ENCODE measurements at regions of chr10 and their contacts with region 1.

Region 1: GRCh38 chr10:61284222-61284890 is 168.8 kb downstream of the TMEM26 start:
- DNase-seq: no peak
- H3K4me3 ChIP-seq: no peak overlapping the region
- H3K27ac ChIP-seq: no peak overlapping the region
- H3K4me1 ChIP-seq: no peaks in the 10 kb centered on the region
- H3K27me3 ChIP-seq: no peaks in the 10 kb centered on the region
- CTCF ChIP-seq: peak; percentile 65 to 88 (median 79)
- POLR2A ChIP-seq: no peak

Region 2: DNA sequence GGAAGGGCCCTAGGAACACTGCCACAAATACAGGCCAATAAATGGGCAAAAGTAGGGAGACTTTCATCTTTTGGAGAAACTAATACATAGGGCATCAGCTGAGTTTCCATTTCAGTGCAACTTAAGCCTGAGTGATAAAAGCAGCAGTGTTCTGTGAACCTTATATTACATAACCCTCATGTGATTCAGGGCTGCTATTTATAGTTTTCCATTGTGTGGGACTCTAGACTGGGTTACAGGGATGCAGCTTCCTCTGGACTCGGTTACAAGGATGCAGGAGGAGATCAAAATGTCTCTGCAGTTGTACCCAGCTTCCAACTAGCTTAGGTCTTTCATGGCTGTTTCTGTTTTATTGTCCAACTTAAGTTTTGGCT is 473.6 kb before region 1 on chr10:
- intact Hi-C with region 1: loop called (anchors 5 kb)
- DNase-seq: no peak
- H3K4me3 ChIP-seq: no peak overlapping the region
- H3K27ac ChIP-seq: peak overlapping the region in 1 of 2 donors; percentile 59
- H3K4me1 ChIP-seq: no peaks in the 10 kb centered on the region
- H3K27me3 ChIP-seq: peaks cover 5% of the 10 kb centered on the region
- CTCF ChIP-seq: no peak
- POLR2A ChIP-seq: no peak

Region 3: GRCh38 chr10:60914690-60915141 is 369.6 kb before region 1 on chr10:
- intact Hi-C with region 1: no loop called
- DNase-seq: peak; percentile 77
- H3K4me3 ChIP-seq: no peak overlapping the region
- H3K27ac ChIP-seq: no peak overlapping the region
- H3K4me1 ChIP-seq: no peaks in the 10 kb centered on the region
- H3K27me3 ChIP-seq: no peaks in the 10 kb centered on the region
- CTCF ChIP-seq: no peak
- POLR2A ChIP-seq: no peak

Region 4: GRCh38 chr10:61135276-61135721 is 149.1 kb before region 1 on chr10:
- intact Hi-C with region 1: loop called (anchors 10 kb)
- DNase-seq: no peak
- H3K4me3 ChIP-seq: no peak overlapping the region
- H3K27ac ChIP-seq: no peak overlapping the region
- H3K4me1 ChIP-seq: no peaks in the 10 kb centered on the region
- H3K27me3 ChIP-seq: no peaks in the 10 kb centered on the region
- CTCF ChIP-seq: no peak
- POLR2A ChIP-seq: no peak